Heart right ventricle (tissue), 16 donors: ENCODE measurements at regions of chr3 and their contacts with region 1.

Region 1: GRCh38 chr3:51384726-51385473 is at the start of gene MANF:
- DNase-seq: peak; percentile 97 to 98
- ATAC-seq: peak; percentile 97 to 99 (median 99)
- H3K4me3 ChIP-seq: peak within 1 kb of the TSS; percentile 73 to 97 (median 86)
- H3K27ac ChIP-seq: peak within 1 kb of the TSS; percentile 80 to 98 (median 94)
- H3K4me1 ChIP-seq: peaks cover 12 to 56% (median 49%) of the 10 kb centered on the region in 9 donors
- H3K27me3 ChIP-seq: no peaks in the 10 kb centered on the region
- CTCF ChIP-seq: peak in 1 of 9 donors; percentile 27
- total RNA-seq, gene MANF: 33.8 to 82.3 (median 45.1) TPM

Region 2: DNA sequence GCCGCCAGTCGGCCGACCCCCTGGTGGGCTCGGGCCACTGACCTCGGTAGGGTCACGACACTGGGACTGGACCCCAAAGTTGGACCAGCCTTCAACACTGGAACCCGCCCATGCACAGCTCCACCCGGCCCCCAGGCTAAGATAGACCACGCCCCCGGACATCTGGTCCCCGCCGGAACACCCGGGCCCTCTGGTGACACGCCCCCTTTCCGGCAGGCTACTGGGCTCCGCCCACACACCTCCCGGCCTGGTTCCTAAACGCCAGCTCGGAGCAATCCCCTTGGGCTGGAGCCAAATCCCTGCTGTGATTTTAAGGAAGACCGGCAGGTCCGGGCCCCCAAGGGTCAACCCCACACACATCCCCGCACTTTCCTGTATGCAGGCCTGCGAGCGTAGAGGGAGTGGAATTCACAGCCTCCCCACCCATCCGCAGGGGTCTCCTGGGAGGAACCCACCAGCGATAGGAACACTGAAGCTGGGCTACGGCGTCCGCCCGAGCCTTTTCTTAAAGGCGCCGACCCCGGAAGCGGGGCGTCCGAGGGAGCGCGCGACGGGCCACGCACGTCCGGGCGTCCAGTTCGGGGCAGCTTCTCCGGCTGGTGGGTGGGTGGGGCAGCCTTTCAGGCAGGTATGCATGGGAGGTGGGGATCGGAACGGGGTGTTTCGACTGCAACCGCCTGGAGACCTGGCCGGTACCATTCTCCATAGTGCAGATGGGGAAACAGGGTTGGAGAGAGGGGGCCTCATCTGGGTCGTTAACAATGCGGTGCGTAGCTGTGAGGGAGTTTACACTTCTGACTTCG is 815.8 kb before region 1 on chr3 and contains the start of gene HEMK1:
- intact Hi-C with region 1: loop called in 2 of 10 experiments (anchors 10 kb)
- DNase-seq: peak; percentile 98 to 99
- ATAC-seq: peak; percentile 85 to 95 (median 90)
- H3K4me3 ChIP-seq: peak within 1 kb of the TSS; percentile 35 to 92 (median 78)
- H3K27ac ChIP-seq: peak within 1 kb of the TSS; percentile 85 to 95 (median 92)
- H3K4me1 ChIP-seq: peaks cover 11 to 69% (median 47%) of the 10 kb centered on the region in 9 donors
- H3K27me3 ChIP-seq: no peaks in the 10 kb centered on the region
- CTCF ChIP-seq: no peak
- total RNA-seq, gene HEMK1: 10.6 to 19.0 (median 14.8) TPM

Region 3: GRCh38 chr3:50627407-50628051 is 757.4 kb before region 1 on chr3:
- intact Hi-C with region 1: loop called in 1 of 10 experiments (anchors 5 kb)
- DNase-seq: peak in 1 of 2 donors; percentile 56
- ATAC-seq: peak; percentile 36 to 94 (median 84)
- H3K4me3 ChIP-seq: no peak overlapping the region
- H3K27ac ChIP-seq: peak overlapping the region in 9 of 10 donors; percentile 47 to 97 (median 69)
- H3K4me1 ChIP-seq: peaks cover 15 to 100% (median 82%) of the 10 kb centered on the region in 9 donors
- H3K27me3 ChIP-seq: no peaks in the 10 kb centered on the region
- CTCF ChIP-seq: peak in 6 of 9 donors; percentile 17 to 54 (median 44)

Region 4: GRCh38 chr3:51156147-51156546 is 228.8 kb before region 1 on chr3:
- intact Hi-C with region 1: no loop called
- DNase-seq: no peak
- ATAC-seq: no peak
- H3K4me3 ChIP-seq: no peak overlapping the region
- H3K27ac ChIP-seq: no peak overlapping the region
- H3K4me1 ChIP-seq: no peaks in the 10 kb centered on the region
- H3K27me3 ChIP-seq: no peaks in the 10 kb centered on the region
- CTCF ChIP-seq: no peak

Region 5: GRCh38 chr3:51311055-51311454 is 73.8 kb before region 1 on chr3:
- intact Hi-C with region 1: no loop called
- DNase-seq: no peak
- ATAC-seq: no peak
- H3K4me3 ChIP-seq: no peak overlapping the region
- H3K27ac ChIP-seq: no peak overlapping the region
- H3K4me1 ChIP-seq: no peaks in the 10 kb centered on the region
- H3K27me3 ChIP-seq: no peaks in the 10 kb centered on the region
- CTCF ChIP-seq: peak in 6 of 9 donors; percentile 6 to 37 (median 31)

Region 6: DNA sequence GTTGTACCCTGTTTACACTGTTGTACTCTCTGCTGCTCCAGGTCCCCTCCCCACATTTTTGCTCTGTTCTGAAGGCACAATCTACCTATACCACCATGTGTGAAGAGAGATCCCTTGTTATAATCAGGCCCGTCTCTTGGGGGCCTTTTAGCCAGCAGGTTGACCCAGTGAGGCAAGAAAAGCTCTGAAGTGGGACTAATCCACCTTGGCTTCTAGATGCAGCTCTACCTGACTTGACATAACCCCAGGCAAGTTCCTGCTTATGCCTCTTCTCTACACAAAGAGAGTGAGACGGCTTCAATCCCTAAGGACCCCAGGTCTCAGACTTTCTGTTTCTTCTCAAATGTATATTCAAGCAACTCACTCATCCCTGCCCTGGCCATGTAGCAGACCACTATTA is 56.7 kb before region 1 on chr3:
- intact Hi-C with region 1: no loop called
- DNase-seq: no peak
- ATAC-seq: no peak
- H3K4me3 ChIP-seq: no peak overlapping the region
- H3K27ac ChIP-seq: no peak overlapping the region
- H3K4me1 ChIP-seq: no peaks in the 10 kb centered on the region
- H3K27me3 ChIP-seq: no peaks in the 10 kb centered on the region
- CTCF ChIP-seq: no peak

Region 7: GRCh38 chr3:51538459-51539290 is 153.8 kb after region 1 on chr3 and contains the start of gene RAD54L2:
- intact Hi-C with region 1: no loop called
- DNase-seq: peak; percentile 83 to 85
- ATAC-seq: peak; percentile 95 to 98 (median 97)
- H3K4me3 ChIP-seq: peak within 1 kb of the TSS; percentile 79 to 98 (median 96)
- H3K27ac ChIP-seq: peak within 1 kb of the TSS; percentile 33 to 95 (median 92)
- H3K4me1 ChIP-seq: peaks cover 11 to 31% (median 24%) of the 10 kb centered on the region in 9 donors
- H3K27me3 ChIP-seq: no peaks in the 10 kb centered on the region
- CTCF ChIP-seq: peak in 5 of 9 donors; percentile 30 to 62 (median 42)
- total RNA-seq, gene RAD54L2: 11.5 to 14.5 (median 13.4) TPM

Region 8: DNA sequence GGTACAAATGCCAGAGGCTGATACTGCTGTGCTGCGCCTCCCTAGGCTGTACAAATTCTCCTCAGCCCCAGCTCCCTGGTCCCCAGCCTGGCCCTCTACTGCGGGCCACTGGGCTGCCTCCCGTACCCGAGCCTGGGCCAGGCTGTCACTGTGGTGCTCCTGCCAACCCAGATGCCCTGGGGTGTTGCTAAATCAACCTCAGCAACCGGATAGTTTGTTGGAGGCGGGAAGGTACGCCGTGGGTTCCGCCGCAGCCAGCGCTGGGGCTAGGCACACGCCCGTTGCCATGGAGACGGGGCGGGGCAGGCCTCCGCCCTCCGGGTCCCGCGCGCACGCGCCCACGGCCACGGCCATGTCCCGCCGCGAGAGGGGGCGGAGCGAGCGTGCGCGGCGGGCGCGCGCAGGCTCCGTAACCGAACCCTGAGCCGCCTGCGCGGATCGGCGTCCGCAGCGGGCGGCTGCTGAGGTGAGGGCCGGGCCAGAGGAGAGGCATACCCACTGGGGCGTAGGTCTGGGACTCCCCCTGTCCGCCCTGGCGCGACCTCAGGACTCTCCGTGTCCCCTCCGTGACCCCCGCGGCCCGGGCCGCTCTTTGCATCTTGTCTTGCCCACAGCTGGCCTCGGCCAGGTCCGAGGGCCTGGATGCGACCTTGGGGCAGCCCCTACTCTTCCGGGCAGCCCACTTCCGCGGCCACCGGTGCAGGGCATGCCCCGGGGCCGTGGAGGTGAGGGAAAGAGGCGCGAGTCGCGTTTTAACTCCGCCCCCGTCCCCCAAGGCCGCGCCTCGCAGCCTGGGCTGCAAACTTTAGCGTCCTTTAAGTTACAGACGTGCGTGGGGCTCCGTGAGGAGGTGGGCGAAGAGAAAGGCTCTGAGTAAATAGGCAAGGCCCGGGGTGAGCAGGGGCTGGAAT is 286.2 kb after region 1 on chr3 and contains the start of gene TEX264:
- intact Hi-C with region 1: loop called in 5 of 10 experiments (anchors 5 to 10 kb)
- DNase-seq: peak; percentile 87 to 95
- ATAC-seq: peak; percentile 90 to 96 (median 94)
- H3K4me3 ChIP-seq: peak within 1 kb of the TSS; percentile 72 to 98 (median 88)
- H3K27ac ChIP-seq: peak within 1 kb of the TSS; percentile 90 to 99 (median 97)
- H3K4me1 ChIP-seq: peaks cover 7 to 65% (median 40%) of the 10 kb centered on the region in 9 donors
- H3K27me3 ChIP-seq: no peaks in the 10 kb centered on the region
- CTCF ChIP-seq: peak in 1 of 9 donors; percentile 10
- total RNA-seq, gene TEX264: 28.4 to 50.1 (median 33.4) TPM

Region 9: GRCh38 chr3:51682079-51682478 is 297.2 kb after region 1 on chr3:
- intact Hi-C with region 1: loop called in 8 of 10 experiments (anchors 10 kb)
- DNase-seq: peak in 1 of 2 donors; percentile 81
- ATAC-seq: peak; percentile 45 to 81 (median 67)
- H3K4me3 ChIP-seq: peak overlapping the region in 1 of 10 donors; percentile 20
- H3K27ac ChIP-seq: peak overlapping the region in 9 of 10 donors; percentile 24 to 96 (median 93)
- H3K4me1 ChIP-seq: peaks cover 51 to 98% (median 88%) of the 10 kb centered on the region in 9 donors
- H3K27me3 ChIP-seq: no peaks in the 10 kb centered on the region
- CTCF ChIP-seq: peak; percentile 61 to 85 (median 83)